ENCODE measurements at regions of chr11 and their contacts with region 1.

Region 1: DNA sequence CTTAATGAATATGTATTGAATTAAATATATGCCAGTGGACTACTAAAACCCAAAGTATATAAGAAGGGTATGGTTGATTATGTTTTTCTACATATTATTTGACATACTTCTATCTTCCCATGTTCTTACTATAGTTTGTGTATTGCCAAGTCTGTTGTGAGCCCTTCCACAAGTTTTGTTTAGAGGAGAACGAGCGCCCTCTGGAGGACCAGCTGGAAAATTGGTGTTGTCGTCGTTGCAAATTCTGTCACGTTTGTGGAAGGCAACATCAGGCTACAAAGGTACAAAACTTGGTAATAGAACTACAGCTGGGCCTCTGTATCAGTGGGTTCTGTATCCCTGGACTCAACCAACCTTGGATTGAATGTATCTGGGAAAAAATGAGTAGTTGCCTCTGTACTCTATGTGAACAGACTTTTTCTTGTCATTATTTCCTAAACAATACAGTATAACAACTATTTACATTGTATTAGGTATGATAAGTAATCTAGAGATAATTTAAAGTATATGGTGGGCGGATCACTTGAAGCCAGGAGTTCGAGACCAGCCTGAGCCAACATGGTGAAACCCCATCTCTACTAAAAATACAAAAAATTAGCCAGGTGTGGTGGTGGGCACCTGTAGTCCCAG is 38.7 kb upstream of the TTC36 start:
- H3K4me3 Mint-ChIP-seq: no peak overlapping the region
- H3K27ac Mint-ChIP-seq: no peak overlapping the region
- H3K4me1 Mint-ChIP-seq: no peaks in the 10 kb centered on the region
- H3K27me3 Mint-ChIP-seq: no peaks in the 10 kb centered on the region

Region 2: DNA sequence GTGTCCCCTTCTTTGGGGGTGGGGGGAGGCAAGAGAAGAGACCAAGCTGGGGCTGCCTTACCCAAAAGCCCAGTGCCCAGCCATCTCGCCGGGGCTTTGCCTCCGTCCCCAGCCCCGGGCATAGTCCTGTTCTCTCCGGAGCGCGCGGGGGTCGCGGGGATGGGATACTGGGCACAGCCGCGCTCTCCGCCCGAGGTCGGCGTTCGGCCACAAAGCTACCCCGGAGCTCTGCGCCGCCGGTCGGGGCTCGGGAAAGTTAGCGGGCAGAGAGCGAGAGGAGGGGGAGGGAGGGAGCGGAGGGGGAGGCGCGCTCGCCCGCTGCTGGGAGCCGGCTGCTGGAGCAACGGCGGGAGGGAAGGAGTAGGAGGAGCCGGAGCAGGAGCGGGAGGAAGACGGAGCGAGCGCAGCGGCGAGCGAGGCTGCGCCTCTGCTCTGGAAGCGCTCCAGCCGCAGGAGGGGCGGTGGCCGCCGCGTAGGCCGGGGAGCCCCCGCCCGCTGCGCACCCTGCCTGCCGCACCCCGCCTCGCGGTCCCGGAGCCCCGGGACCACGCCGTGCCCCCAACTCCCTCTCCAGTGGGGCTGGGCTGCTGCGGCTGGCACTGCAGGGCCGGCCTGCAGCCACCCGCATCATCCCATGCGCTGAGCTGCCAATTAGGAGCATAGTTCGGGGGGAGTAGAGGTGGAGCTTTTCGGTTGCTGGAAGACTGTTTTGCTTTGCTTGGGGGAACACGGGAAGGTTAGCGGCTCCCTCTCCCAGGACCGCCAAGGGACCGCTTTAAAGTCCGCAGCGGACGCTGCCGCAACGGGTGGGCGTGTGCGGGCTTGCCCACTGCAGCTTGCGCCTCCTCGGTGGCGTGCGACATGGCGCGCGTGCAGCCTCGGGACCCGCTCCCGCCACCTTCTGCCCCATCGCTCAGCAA is 335.8 kb before region 1 on chr11 and contains the start of gene SCN4B:
- intact Hi-C with region 1: loop called (anchors 10 kb)
- H3K4me3 Mint-ChIP-seq: peak within 1 kb of the TSS; percentile 69
- H3K27ac Mint-ChIP-seq: no peak within 1 kb of the TSS
- H3K4me1 Mint-ChIP-seq: peaks cover 33% of the 10 kb centered on the region
- H3K27me3 Mint-ChIP-seq: peaks cover 78% of the 10 kb centered on the region

Region 3: DNA sequence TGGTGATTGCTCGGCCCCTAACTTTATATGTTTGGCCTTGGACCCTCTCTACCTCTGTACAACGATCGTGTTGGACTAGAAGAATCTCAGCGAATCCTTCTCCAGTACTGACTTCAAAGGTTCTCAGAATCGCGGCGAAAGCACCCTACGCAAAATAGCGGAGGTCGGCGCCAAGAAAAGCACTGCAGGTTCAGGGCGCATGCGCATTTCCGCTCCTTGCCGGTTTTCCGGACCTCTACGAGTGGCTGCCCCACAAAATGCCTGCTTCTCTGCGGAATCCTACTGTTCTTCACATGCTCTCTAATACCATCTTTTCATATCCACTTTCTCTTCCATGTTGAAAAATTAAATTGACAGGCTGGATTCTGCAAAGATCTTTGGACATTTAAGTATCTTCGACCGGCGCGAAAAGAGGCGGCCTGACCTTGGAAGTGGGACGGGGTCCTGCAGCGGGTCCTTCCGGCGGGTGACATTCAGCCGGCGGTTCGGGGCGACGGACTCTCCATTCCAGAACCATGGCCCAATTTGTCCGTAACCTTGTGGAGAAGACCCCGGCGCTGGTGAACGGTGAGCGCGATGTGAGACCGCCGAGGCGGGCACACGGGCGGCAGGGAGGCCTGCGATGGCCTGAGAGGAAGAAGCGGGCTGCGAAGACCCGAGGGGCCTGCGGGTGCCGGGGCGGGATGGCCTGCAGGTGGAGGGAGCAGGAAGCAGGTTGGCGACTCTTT is 87.3 kb before region 1 on chr11 and contains the start of gene ATP5MG:
- intact Hi-C with region 1: loop called (anchors 2 kb)
- H3K4me3 Mint-ChIP-seq: peak within 1 kb of the TSS; percentile 89
- H3K27ac Mint-ChIP-seq: peak within 1 kb of the TSS; percentile 98
- H3K4me1 Mint-ChIP-seq: peaks cover 38% of the 10 kb centered on the region
- H3K27me3 Mint-ChIP-seq: no peaks in the 10 kb centered on the region

Region 4: DNA sequence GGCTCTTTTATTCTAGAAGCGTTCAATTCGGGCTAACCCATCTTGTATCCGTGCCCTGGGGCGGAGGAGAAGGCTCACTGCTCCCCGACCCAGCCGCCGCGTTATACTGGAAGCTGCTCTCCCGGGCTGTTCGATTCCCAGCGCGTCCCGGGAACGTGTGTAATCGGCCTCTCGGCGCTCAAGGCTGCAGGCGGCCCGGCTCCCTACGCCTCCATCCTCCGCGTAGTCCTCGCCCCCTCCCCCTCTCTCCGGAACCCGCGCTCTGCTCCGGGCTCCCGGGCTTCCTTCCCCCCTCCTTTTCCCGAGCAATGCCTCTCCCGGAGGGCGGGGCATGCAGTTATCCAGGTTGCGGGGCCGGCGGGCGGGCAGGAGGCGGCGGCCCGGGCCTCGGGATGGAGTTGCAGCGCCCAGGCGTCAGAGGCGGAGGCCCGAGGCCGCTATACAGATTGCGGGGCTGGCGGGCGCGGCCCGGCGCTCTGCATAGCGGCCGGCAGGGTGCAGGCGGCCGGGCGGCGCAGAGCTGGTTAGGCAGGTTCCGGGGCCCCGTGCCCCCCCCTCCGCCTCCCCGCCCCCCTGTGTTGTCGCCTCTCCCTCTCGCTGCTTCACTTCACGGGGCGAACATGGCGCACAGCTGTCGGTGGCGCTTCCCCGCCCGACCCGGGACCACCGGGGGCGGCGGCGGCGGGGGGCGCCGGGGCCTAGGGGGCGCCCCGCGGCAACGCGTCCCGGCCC is 52.5 kb before region 1 on chr11 and contains the start of gene KMT2A:
- intact Hi-C with region 1: loop called (anchors 10 kb)
- H3K4me3 Mint-ChIP-seq: peak within 1 kb of the TSS; percentile 96
- H3K27ac Mint-ChIP-seq: peak within 1 kb of the TSS; percentile 74
- H3K4me1 Mint-ChIP-seq: peaks cover 54% of the 10 kb centered on the region
- H3K27me3 Mint-ChIP-seq: peaks cover 16% of the 10 kb centered on the region

Measured in dendritic cell treated with granulocyte-macrophage colony-stimulating factor and Interleukin-4, amounts not matched to agents 40 ng/mL and 50 ng/mL, for 4 days (primary cell).